Activated CD4-positive, alpha-beta T cell treated with anti-CD3 and anti-CD28 coated beads, Interleukin-2, amount 10 ng/mL, durations not matched to agents 7 days and 5 days (primary cell): ENCODE measurements at regions of chr12 and their contacts with region 1.

Region 1: GRCh38 chr12:121888478-121889266 is at the start of gene PSMD9:
- DNase-seq: peak; percentile 99
- H3K4me3 Mint-ChIP-seq: peak within 1 kb of the TSS; percentile 94
- H3K27ac Mint-ChIP-seq: peak within 1 kb of the TSS; percentile 98
- H3K4me1 Mint-ChIP-seq: peaks cover 39% of the 10 kb centered on the region
- H3K27me3 Mint-ChIP-seq: peaks cover 1% of the 10 kb centered on the region
- total RNA-seq, gene PSMD9: 60.0 to 62.0 TPM

Region 2: DNA sequence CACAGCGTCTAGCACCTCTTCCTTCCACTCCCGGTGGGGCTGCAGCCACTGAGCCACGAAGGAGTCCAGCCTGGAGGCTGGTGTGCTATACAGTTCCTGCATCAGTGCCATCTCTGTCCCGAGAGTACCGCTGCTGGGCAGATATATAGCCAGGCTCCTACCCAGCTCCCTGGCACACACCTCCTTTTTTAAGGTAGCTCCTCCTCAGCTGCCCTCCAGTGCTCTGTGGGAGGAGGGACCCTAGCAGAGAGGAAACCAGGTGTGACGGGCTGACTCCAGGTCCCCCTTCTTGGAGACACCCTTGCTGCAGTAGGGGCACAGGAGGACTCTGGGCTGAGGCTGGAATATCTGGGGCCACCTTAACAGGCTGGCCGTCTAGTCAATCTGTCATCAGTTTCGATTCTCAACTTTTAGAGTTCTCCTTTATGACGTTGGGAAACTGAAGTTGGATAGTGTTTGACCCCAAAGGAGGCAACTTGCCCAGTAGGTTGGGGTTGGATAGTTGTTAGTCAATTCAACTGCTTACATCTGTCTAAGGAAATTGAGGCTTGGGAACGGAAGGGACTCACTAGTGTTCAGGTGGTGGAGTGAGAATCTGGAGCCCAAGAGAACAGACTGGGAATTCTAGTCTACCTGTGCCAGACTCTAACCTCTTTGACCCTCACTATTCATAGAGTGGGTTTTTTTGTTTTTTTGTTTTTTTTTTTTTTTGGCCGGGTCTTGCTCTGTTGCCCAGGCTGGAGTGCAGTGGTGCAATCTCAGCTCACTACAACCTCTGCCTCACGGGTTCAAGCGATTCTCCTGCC is 849.6 kb before region 1 on chr12 and contains the start of gene OASL:
- CTCF ChIA-PET with region 1: no interaction called
- POLR2A ChIA-PET with region 1: no interaction called
- DNase-seq: peak; percentile 75
- H3K4me3 Mint-ChIP-seq: peak within 1 kb of the TSS; percentile 98
- H3K27ac Mint-ChIP-seq: peak within 1 kb of the TSS; percentile 94
- H3K4me1 Mint-ChIP-seq: peaks cover 46% of the 10 kb centered on the region
- H3K27me3 Mint-ChIP-seq: peaks cover 17% of the 10 kb centered on the region
- total RNA-seq, gene OASL: 28.5 to 34.2 TPM

Region 3: GRCh38 chr12:121811434-121812319 is 77.0 kb before region 1 on chr12:
- CTCF ChIA-PET with region 1: interaction called, 19 read pairs
- POLR2A ChIA-PET with region 1: no interaction called
- DNase-seq: peak; percentile 60
- H3K4me3 Mint-ChIP-seq: peak overlapping the region; percentile 78
- H3K27ac Mint-ChIP-seq: peak overlapping the region; percentile 78
- H3K4me1 Mint-ChIP-seq: peaks cover 57% of the 10 kb centered on the region
- H3K27me3 Mint-ChIP-seq: no peaks in the 10 kb centered on the region

Region 4: DNA sequence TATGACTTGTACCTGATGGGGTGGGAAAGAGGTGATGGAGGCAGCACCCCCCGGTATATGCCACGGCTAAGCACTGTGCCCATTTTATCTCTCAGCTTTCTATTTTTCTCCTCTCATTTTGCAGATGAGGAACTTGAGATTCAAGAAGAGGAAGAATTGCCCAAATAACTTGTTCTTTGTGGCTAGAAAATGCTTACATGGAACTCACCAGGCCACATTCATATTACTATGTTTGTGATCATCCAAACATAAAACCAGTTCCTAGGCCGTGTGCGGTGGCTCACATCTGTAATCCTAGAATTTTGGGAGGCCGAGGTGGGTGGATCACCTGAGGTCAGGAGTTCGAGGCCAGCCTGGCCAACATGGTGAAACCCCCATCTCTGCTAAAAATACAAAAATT is 14.6 kb before region 1 on chr12:
- CTCF ChIA-PET with region 1: interaction called, 11 read pairs
- POLR2A ChIA-PET with region 1: no interaction called
- DNase-seq: no peak
- H3K4me3 Mint-ChIP-seq: no peak overlapping the region
- H3K27ac Mint-ChIP-seq: peak overlapping the region; percentile 2
- H3K4me1 Mint-ChIP-seq: no peaks in the 10 kb centered on the region
- H3K27me3 Mint-ChIP-seq: no peaks in the 10 kb centered on the region

Region 5: GRCh38 chr12:121917979-121918678 is 29.5 kb after region 1 on chr12 and contains the start of gene CFAP251:
- CTCF ChIA-PET with region 1: interaction called, 12 read pairs
- POLR2A ChIA-PET with region 1: no interaction called
- DNase-seq: peak; percentile 99
- H3K4me3 Mint-ChIP-seq: peak within 1 kb of the TSS; percentile 66
- H3K27ac Mint-ChIP-seq: peak within 1 kb of the TSS; percentile 87
- H3K4me1 Mint-ChIP-seq: peaks cover 18% of the 10 kb centered on the region
- H3K27me3 Mint-ChIP-seq: no peaks in the 10 kb centered on the region
- total RNA-seq, gene CFAP251: 0.30 to 0.52 TPM

Region 6: DNA sequence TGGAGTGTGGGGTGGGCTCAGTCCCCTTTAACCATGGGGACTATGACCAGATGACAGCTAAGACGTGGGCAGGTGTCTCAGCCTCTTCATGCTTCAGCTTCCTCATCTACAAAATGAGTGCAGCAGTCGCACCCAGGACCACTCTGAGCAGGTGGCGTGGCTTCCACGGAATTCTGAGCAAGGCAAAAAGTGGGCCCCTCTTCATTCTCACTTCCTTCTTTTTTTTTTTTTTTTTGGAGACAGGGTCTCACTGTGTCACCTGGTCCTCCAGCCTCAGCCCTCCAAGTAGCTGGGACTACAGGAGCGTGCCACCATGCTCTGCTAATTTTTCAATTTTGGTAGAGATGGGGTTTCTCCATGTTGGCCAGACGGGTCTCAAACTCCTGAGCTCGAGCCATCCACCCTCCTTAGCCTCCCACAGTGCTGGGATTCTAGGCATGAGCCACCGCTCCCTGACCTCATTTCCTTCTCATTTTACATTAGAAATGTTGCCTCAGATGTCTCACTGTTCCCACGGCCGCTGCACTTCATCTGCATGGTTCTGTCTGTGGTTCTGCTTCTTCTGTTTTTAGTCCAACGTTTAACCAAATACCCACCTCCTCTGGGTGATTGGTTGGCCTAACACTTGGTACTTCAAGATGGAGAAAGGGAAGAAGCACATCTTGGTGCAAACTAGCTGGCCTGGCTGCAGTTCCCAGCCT is 91.7 kb after region 1 on chr12:
- CTCF ChIA-PET with region 1: no interaction called
- POLR2A ChIA-PET with region 1: no interaction called
- DNase-seq: no peak
- H3K4me3 Mint-ChIP-seq: no peak overlapping the region
- H3K27ac Mint-ChIP-seq: no peak overlapping the region
- H3K4me1 Mint-ChIP-seq: peaks cover 7% of the 10 kb centered on the region
- H3K27me3 Mint-ChIP-seq: peaks cover 2% of the 10 kb centered on the region

Region 7: DNA sequence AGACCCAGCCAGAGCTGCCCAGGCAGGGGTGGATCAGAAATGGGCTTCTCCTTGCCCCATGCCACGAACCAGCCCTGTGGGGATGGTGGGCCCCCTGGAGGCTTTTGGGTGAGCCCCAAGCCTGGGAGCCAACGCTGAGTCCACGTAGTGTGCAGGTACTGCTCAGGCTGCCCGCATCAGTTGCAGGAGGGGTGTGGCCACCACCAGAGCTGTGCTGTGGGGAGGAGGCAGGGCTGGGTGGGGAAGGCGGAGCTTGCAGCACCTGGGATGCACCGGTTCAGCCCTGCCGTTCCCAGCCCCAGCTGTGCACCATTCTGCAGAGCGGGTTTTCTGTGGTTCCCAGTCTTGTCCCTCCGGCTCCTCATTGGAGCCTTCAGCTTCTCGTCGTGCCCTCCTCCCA is 249.0 kb after region 1 on chr12:
- CTCF ChIA-PET with region 1: no interaction called
- POLR2A ChIA-PET with region 1: no interaction called
- DNase-seq: no peak
- H3K4me3 Mint-ChIP-seq: no peak overlapping the region
- H3K27ac Mint-ChIP-seq: no peak overlapping the region
- H3K4me1 Mint-ChIP-seq: no peaks in the 10 kb centered on the region
- H3K27me3 Mint-ChIP-seq: no peaks in the 10 kb centered on the region